ENCODE measurements at regions of chr10 and their contacts with region 1.

Region 1: GRCh38 chr10:119725828-119726675 is at the start of gene INPP5F:
- DNase-seq: peak; percentile 96
- ATAC-seq: peak; percentile 98
- H3K4me3 ChIP-seq: peak within 1 kb of the TSS; percentile 84
- H3K27ac ChIP-seq: peak within 1 kb of the TSS; percentile 92
- H3K4me1 ChIP-seq: peaks cover 8% of the 10 kb centered on the region
- H3K27me3 ChIP-seq: no peaks in the 10 kb centered on the region
- CTCF ChIP-seq: 0 out of 2 replicates have a peak, but pooled peaks have one; percentile 24
- POLR2A ChIP-seq: no peak
- RAD21 ChIP-seq: peak; percentile 19
- total RNA-seq, gene INPP5F: 29.6 and 35.3 TPM in 2 replicates

Region 2: GRCh38 chr10:119596537-119597404 is 129.3 kb before region 1 on chr10 and contains the start of gene TIAL1:
- CTCF ChIA-PET with region 1: no interaction called
- POLR2A ChIA-PET with region 1: no interaction called
- dilution Hi-C with region 1: no loop called
- in situ Hi-C with region 1: no loop called
- intact Hi-C with region 1: loop called (anchors 2 kb)
- DNase-seq: peak; percentile 99
- ATAC-seq: peak; percentile 87
- H3K4me3 ChIP-seq: peak within 1 kb of the TSS; percentile 78
- H3K27ac ChIP-seq: peak within 1 kb of the TSS; percentile 96
- H3K4me1 ChIP-seq: peaks cover 5% of the 10 kb centered on the region; the same call in 1 of the 2 replicates
- H3K27me3 ChIP-seq: no peaks in the 10 kb centered on the region
- CTCF ChIP-seq: no peak
- POLR2A ChIP-seq: peak; percentile 71
- RAD21 ChIP-seq: no peak
- total RNA-seq, gene TIAL1: 28.0 and 44.2 TPM in 2 replicates

Region 3: DNA sequence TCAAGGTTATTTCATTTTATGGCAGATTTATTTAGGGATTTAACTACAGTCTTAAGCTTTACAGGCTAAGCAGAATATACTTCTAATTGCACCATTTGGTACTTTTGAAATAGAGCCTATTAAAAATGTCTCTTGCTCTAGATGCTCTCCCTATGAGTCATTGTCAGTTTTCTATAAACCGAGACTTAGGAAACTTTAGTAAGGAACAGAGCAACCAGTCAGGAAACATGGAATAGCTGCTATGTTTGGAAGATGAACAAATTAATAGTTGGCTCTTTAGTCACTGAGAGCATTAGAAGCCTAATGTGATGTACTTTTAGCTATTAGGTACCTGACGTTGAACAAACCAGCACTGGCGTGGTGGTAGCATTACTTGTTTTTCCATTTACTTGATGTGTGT is 35.1 kb after region 1 on chr10:
- CTCF ChIA-PET with region 1: no interaction called
- POLR2A ChIA-PET with region 1: no interaction called
- dilution Hi-C with region 1: no loop called
- in situ Hi-C with region 1: no loop called
- intact Hi-C with region 1: no loop called
- DNase-seq: peak; percentile 94
- ATAC-seq: peak; percentile 88
- H3K4me3 ChIP-seq: no peak overlapping the region
- H3K27ac ChIP-seq: no peak overlapping the region
- H3K4me1 ChIP-seq: peaks cover 10% of the 10 kb centered on the region
- H3K27me3 ChIP-seq: no peaks in the 10 kb centered on the region
- CTCF ChIP-seq: no peak
- POLR2A ChIP-seq: no peak
- RAD21 ChIP-seq: no peak

Measured in IMR-90 (cell line).